ENCODE measurements at regions of chr9 and their contacts with region 1.

Region 1: DNA sequence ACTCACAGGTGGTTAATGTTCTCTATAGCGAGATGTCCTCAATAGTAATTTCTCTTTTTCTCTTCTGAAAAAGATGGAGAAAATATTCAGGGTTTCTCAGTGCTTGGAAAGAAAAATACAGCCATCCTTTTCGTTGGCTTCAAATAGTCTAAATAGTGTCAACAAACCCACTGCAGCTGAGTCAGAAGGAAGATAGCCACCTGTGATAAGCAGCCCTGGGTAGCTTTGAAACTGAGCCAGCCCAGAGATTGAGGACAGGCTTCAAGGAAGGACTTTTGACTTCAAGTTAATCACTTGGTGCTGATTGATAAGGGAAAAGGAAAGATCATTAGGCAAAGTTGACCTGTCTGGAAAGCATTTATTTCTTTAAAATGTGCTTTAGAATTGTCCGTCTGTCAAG is 78.7 kb upstream of the TYRP1 start:
- DNase-seq: no peak
- ATAC-seq: no peak
- H3K4me3 Mint-ChIP-seq: no peak overlapping the region
- H3K27ac Mint-ChIP-seq: no peak overlapping the region
- H3K4me1 Mint-ChIP-seq: no peaks in the 10 kb centered on the region
- H3K27me3 Mint-ChIP-seq: no peaks in the 10 kb centered on the region

Region 2: DNA sequence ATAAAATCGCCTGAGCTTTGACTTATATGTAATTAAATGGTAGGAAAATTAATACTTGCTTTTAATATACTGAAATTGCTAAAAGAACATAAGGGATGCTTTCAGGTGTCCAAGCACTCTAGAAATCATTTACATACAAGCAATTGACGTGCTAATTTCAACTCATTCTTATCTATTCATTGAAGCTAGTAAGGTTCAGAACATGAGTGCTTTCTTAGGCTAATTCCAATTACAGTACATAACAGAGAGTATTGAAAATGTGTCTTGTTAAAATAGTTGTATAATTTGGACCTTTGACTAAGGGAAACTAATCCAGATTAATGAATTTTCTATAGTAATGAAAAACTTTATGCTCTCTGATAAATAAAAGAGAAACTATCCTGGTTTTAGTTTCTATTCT is 937.7 kb before region 1 on chr9:
- CTCF ChIA-PET with region 1: no interaction called
- POLR2A ChIA-PET with region 1: no interaction called
- intact Hi-C with region 1: no loop called
- DNase-seq: no peak
- ATAC-seq: no peak
- H3K4me3 Mint-ChIP-seq: no peak overlapping the region
- H3K27ac Mint-ChIP-seq: no peak overlapping the region
- H3K4me1 Mint-ChIP-seq: no peaks in the 10 kb centered on the region
- H3K27me3 Mint-ChIP-seq: no peaks in the 10 kb centered on the region

Region 3: GRCh38 chr9:12595400-12595799 is 19.1 kb before region 1 on chr9:
- CTCF ChIA-PET with region 1: no interaction called
- POLR2A ChIA-PET with region 1: no interaction called
- intact Hi-C with region 1: no loop called
- DNase-seq: no peak
- ATAC-seq: no peak
- H3K4me3 Mint-ChIP-seq: no peak overlapping the region
- H3K27ac Mint-ChIP-seq: no peak overlapping the region
- H3K4me1 Mint-ChIP-seq: no peaks in the 10 kb centered on the region
- H3K27me3 Mint-ChIP-seq: no peaks in the 10 kb centered on the region

Region 4: GRCh38 chr9:12640016-12640587 is 25.6 kb after region 1 on chr9:
- CTCF ChIA-PET with region 1: no interaction called
- POLR2A ChIA-PET with region 1: no interaction called
- intact Hi-C with region 1: loop called in 1 of 2 experiments (anchors 2 kb)
- DNase-seq: no peak
- ATAC-seq: no peak
- H3K4me3 Mint-ChIP-seq: no peak overlapping the region
- H3K27ac Mint-ChIP-seq: no peak overlapping the region
- H3K4me1 Mint-ChIP-seq: no peaks in the 10 kb centered on the region
- H3K27me3 Mint-ChIP-seq: no peaks in the 10 kb centered on the region

Region 5: DNA sequence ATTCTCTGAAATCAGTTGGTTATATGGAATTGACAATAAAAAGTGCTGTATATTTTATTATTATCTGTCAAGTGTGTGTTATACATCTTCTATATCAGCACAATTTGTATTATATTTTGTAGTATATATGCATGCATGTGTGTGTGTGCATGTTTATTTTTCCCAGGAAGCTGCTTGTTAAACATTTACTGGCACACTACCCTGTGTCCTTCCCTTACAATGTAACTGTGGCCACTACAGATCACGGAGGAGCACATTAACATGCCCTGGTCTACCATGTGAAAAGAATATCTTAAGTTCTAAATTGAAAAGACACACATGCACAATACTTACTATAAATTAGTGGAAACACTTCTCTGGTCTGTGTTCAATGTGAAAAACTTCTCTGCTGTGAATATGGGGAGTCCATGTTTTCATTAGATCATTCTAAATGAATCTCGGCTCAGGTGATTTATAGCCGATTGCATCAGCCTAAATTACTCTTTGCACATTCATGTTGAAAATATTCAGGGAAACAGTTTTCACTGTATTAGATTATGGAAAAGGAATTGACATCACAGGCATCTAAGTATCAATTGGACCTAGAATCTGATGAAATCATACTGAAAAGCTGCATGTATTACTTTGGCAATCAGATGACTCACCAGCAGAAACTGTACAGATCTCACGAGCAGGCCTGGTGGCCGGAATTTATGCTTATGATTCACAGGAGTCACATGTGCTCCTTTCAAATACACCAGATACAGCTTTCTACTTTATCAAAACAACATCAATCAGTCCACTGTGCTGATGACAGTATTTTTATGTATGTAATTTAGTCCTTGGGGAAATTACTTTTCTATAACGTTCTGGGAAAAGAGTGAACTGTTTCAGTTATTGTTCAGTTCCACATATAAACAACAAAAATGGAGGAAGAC is 199.7 kb after region 1 on chr9:
- CTCF ChIA-PET with region 1: no interaction called
- POLR2A ChIA-PET with region 1: no interaction called
- intact Hi-C with region 1: no loop called
- DNase-seq: peak; percentile 6
- ATAC-seq: peak; percentile 42
- H3K4me3 Mint-ChIP-seq: no peak overlapping the region
- H3K27ac Mint-ChIP-seq: no peak overlapping the region
- H3K4me1 Mint-ChIP-seq: no peaks in the 10 kb centered on the region
- H3K27me3 Mint-ChIP-seq: no peaks in the 10 kb centered on the region

Region 6: GRCh38 chr9:13705918-13706317 is 1091.4 kb after region 1 on chr9:
- CTCF ChIA-PET with region 1: no interaction called
- POLR2A ChIA-PET with region 1: no interaction called
- intact Hi-C with region 1: no loop called
- DNase-seq: no peak
- ATAC-seq: no peak
- H3K4me3 Mint-ChIP-seq: no peak overlapping the region
- H3K27ac Mint-ChIP-seq: no peak overlapping the region
- H3K4me1 Mint-ChIP-seq: no peaks in the 10 kb centered on the region
- H3K27me3 Mint-ChIP-seq: no peaks in the 10 kb centered on the region